Thyroid gland (tissue), 4 donors: ENCODE measurements at regions of chr10 and their contacts with region 1.

Region 1: DNA sequence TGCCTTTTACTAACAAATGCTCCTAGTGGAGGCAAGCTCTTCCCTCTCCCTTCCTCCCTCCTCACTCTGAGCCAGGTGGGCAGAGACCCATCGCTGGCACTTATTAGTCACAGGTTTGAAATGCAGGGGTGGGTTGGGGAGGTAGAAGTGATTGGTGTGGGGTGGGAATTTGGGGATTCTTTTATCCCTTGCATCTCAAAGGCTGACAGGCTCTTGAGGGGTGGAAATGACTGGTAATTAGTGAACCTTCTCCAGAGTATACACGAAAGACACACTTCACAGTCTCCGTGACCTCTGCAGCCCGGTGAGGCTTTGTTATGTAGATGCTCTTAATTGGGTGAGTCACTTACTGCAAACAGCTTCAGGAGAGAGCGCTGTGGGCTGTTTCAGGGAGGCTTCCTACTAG is 13.9 kb upstream of the LRMDA start:
- DNase-seq: peak in 1 of 2 donors; percentile 9
- H3K4me3 ChIP-seq: no peak overlapping the region
- H3K27ac ChIP-seq: no peak overlapping the region
- H3K4me1 ChIP-seq: no peaks in the 10 kb centered on the region
- H3K27me3 ChIP-seq: no peaks in the 10 kb centered on the region
- CTCF ChIP-seq: no peak
- POLR2A ChIP-seq: no peak

Region 2: GRCh38 chr10:74275755-74276290 is 1141.7 kb before region 1 on chr10:
- intact Hi-C with region 1: no loop called
- DNase-seq: no peak
- H3K4me3 ChIP-seq: no peak overlapping the region
- H3K27ac ChIP-seq: no peak overlapping the region
- H3K4me1 ChIP-seq: no peaks in the 10 kb centered on the region
- H3K27me3 ChIP-seq: no peaks in the 10 kb centered on the region
- CTCF ChIP-seq: no peak
- POLR2A ChIP-seq: no peak

Region 3: DNA sequence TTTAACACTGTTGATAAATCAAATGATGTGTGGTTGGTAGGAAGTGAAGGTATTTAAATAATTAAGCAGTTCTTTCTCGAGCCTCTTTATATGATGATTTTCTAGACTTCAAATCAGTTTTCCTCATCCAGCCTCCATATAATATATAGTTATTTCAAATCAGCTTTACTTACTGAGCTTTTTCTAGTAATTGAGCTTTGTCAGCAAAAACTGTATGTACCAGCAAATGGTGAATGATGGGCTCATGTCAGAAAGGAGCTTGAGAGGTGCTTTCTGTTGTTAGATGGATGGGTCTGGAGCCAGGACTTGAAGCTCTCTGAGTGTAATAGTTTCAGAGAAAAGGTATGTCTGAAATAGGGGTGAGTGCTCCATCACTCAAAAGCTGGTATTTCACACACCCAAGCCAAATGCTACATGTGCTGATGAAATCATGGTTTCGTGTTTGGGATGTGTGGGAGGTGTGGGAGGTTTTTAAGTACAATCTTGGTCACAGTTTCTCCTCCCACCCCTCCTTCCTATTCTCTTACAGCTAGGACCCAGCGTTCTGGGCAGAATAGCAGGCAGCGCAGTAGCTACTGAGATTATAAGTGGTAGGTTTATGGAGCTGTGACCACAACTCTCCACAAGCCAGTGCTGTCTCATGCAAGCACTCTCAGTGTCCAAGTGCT is 69.7 kb after region 1 on chr10:
- intact Hi-C with region 1: no loop called
- DNase-seq: peak; percentile 52 to 60
- H3K4me3 ChIP-seq: no peak overlapping the region
- H3K27ac ChIP-seq: no peak overlapping the region
- H3K4me1 ChIP-seq: peaks cover 0 to 5% of the 10 kb centered on the region in 2 donors
- H3K27me3 ChIP-seq: no peaks in the 10 kb centered on the region
- CTCF ChIP-seq: no peak
- POLR2A ChIP-seq: no peak

Region 4: DNA sequence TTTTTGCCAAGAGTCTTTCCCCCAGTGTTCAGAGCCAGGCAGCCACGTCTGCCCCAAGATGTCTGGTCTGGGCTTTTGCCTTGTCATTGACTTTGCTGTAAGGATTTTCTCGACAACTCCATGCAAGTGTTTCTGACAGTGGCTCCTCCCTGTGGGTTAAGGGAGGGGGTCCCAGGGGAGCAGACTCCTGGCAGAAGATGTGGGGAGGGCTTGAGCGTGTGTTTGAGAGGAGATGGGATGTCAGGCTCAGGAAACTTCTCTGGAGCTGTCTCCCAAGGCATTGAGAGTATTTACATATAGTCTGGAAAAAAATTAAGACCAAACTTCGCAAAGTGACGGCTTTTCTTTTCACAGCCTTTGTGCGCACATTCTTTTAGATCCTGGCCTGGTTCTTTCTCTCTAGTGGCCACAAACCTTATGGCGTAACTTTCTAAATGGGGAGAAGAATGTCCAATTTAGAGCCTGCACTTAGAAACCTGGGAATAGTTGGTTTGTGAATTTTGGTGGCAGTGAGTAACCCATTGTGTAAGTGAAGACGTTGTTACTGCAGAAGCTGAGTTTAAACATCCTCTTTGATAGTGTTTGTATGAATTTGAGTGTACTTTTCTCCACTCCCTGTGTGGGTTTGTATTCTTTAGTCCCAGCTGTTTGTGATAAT is 215.4 kb after region 1 on chr10:
- intact Hi-C with region 1: no loop called
- DNase-seq: no peak
- H3K4me3 ChIP-seq: no peak overlapping the region
- H3K27ac ChIP-seq: no peak overlapping the region
- H3K4me1 ChIP-seq: no peaks in the 10 kb centered on the region
- H3K27me3 ChIP-seq: no peaks in the 10 kb centered on the region
- CTCF ChIP-seq: no peak
- POLR2A ChIP-seq: no peak

Region 5: DNA sequence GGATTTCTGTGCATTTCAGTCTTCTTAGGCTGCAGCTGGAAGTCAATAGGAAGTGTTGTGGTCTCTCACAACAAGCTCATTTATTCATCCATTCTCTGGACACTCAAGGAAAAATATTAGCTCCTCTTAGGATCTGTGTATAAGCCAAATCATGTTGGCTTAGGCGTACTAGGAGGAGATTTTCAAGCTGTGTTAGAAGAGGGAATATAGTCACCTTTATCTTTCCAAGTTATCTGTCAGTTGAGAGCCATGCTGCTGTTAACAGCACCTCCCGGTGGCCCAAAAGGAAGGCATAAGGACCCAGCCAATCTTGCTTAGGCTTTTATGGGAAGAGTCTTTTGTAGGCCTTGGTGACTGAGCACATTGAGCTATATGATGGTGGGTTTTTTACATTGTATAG is 233.9 kb after region 1 on chr10:
- intact Hi-C with region 1: loop called (anchors 10 kb)
- DNase-seq: peak in 1 of 2 donors; percentile 14
- H3K4me3 ChIP-seq: no peak overlapping the region
- H3K27ac ChIP-seq: no peak overlapping the region
- H3K4me1 ChIP-seq: peaks cover 26 to 60% of the 10 kb centered on the region in 2 donors
- H3K27me3 ChIP-seq: no peaks in the 10 kb centered on the region
- CTCF ChIP-seq: peak in 2 of 6 experiments; percentile 14 to 23
- POLR2A ChIP-seq: no peak